Right lobe of liver (tissue), 6 donors: ENCODE measurements at regions of chr11 and their contacts with region 1.

Region 1: DNA sequence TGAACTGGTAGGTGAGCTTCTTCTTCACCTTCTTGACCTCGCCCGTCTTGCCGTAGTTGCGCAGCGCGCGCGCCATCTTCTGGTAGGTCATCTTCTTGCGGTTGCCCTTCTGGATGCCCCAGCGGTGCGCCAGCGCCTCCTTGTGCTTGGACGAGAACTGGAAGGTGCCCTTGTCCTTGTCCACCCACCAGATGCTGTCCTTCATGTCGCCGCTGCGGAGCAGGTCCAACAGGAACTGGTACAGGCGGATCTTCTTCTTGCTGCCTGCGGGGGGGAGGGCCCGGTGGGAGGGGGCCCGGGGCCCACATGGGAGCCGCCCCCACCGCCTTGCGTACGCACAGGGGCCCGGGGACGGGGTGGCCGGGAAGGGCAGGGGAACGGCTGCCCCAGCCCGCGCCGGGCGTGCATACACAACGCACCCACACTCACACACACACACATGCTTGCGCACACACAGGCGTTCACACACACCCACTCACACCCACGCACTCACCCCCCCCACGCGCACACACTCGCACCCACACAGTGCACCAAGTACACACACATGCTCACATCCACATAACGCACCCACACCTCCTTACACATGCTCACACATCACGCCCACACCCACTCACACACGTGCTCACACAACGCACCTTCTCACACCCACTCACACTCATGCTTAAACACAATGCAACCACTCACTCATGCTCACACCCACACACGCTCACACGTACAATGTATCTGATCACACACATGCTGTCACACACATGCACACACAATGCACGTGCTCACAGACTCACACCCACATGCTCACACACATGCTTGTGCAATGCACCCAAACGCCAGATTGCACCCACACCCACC is 3.0 kb upstream of the MYBPC3 start:
- DNase-seq: peak; percentile 93 to 95 (median 95)
- ATAC-seq: peak; percentile 93 to 98 (median 96)
- H3K4me3 ChIP-seq: peak overlapping the region; percentile 27 to 59 (median 52)
- H3K27ac ChIP-seq: peak overlapping the region; percentile 14 to 59 (median 42)
- H3K4me1 ChIP-seq: no peaks in the 10 kb centered on the region
- H3K27me3 ChIP-seq: no peaks in the 10 kb centered on the region
- CTCF ChIP-seq: peak; percentile 93 to 97 (median 94)
- POLR2A ChIP-seq: no peak

Region 2: DNA sequence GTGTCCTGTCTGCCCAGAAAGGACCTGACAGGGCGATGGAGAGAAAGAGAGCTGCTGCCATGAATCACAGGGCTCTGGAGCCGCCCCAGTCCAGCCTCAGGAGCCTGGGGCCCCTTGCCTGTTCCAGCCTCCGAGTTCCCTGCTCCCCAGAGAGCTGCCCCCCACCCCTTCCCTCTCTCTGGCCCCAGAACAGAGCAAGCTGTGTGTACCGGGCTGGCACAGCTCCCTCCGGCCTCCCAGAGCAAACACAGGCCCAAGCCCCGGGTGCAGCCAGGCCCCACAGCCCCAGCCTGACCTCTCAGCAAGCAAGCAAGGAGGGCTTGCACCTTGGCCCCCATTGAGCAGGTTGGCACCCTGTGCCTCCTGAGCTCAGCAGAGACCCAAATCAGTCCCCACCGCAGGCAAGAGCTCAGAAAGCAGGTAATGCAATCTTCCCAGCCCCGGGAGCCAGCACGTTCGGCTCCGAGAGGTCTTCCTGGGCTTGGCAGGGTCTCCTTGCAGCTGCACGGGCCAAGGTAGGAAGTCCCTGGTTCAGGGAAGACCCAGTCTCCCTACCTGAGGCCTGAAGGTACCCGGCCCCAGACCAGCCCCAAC is 170.7 kb before region 1 on chr11:
- intact Hi-C with region 1: loop called in 1 of 2 experiments (anchors 5 kb)
- DNase-seq: peak; percentile 54 to 95 (median 88)
- ATAC-seq: peak; percentile 24 to 63 (median 60)
- H3K4me3 ChIP-seq: peak overlapping the region; percentile 58 to 74 (median 74)
- H3K27ac ChIP-seq: peak overlapping the region in 2 of 3 donors; percentile 67 to 76
- H3K4me1 ChIP-seq: peaks cover 0 to 50% (median 22%) of the 10 kb centered on the region in 4 donors
- H3K27me3 ChIP-seq: no peaks in the 10 kb centered on the region
- CTCF ChIP-seq: no peak
- POLR2A ChIP-seq: no peak

Region 3: GRCh38 chr11:47254386-47254785 is 101.1 kb before region 1 on chr11:
- intact Hi-C with region 1: no loop called
- DNase-seq: no peak
- ATAC-seq: peak in 3 of 4 donors; percentile 2 to 7 (median 4)
- H3K4me3 ChIP-seq: no peak overlapping the region
- H3K27ac ChIP-seq: peak overlapping the region; percentile 64 to 84 (median 68)
- H3K4me1 ChIP-seq: peaks cover 0 to 50% (median 24%) of the 10 kb centered on the region in 4 donors
- H3K27me3 ChIP-seq: no peaks in the 10 kb centered on the region
- CTCF ChIP-seq: no peak
- POLR2A ChIP-seq: no peak